Activated T-helper 2 cell treated with anti-CD3 and anti-CD28 coated beads, Interferon-gamma antibody, Interleukin-2, Interleukin-4, amounts not matched to agents 10 μg/mL and 5 μg/mL and 100 μg/mL, durations not matched to agents 14 hours and 24 hours and 36 hours (primary cell): ENCODE measurements at regions of chr5 and their contacts with region 1.

Region 1: DNA sequence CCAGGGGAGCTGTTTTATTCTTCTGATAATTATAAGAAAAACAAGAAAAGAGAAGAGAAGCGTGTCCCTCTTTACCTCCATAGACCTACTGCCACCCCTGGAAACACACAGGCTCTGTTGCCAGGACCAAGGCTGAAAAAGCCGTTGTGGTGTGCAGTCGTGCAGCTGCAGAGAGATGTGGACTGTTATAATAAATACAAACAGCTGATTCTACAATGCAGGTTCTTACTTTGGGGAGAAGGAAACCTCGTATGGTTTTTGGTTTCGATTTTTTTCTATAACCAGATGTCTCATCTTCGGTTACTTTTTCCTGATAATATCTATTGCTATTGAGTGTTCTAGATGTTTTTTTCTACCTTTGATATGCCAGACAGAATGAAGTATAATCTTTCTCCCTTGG is 28.1 kb downstream of the FYB1 start:
- DNase-seq: no peak
- H3K4me3 Mint-ChIP-seq: peak overlapping the region; percentile 47
- H3K27ac Mint-ChIP-seq: peak overlapping the region; percentile 72
- H3K4me1 Mint-ChIP-seq: peaks cover 86% of the 10 kb centered on the region
- H3K27me3 Mint-ChIP-seq: no peaks in the 10 kb centered on the region

Region 2: DNA sequence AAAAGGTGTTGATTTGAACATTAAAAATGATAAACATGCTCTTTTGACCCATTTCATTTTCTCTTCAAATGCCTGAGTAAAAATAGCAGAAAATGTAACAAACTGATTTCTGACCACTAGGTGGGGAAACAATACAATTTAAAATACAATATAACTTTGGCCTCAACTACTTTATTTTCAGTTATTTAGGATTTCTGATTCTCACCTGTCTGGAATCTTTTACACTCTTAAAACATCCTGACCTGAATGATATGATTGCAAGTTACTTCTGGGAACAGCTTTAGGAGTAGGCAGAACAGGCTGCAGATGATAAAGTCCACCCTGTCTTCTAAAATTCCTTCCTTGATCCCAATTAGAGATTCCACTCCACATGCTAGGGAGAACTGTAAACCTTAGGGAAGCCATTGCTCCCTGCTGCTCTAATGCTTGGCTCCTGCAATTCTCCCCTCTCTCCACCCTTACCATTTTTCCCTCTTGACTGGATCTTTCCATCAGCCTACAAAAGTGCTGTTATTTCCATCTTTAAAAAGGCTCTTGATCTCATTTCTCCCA is 42.2 kb before region 1 on chr5:
- intact Hi-C with region 1: loop called (anchors 5 kb)
- DNase-seq: no peak
- H3K4me3 Mint-ChIP-seq: no peak overlapping the region
- H3K27ac Mint-ChIP-seq: peak overlapping the region; percentile 52
- H3K4me1 Mint-ChIP-seq: peaks cover 42% of the 10 kb centered on the region
- H3K27me3 Mint-ChIP-seq: no peaks in the 10 kb centered on the region

Region 3: DNA sequence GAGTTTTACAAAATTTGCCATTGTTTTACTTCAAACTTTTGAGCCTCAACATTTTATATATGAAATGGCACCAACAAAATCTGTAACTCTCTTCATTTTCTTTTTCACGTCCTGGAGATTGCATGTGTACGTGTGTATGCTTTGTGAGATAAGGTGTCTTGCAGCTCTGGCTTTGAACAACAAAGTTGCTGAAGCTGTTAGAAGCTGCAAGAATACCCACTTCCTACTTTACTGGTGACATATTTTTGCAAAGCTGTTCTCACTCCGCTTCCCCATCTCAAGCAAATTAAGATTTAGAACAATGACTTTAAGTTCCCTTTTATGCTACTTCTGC is 13.6 kb before region 1 on chr5:
- intact Hi-C with region 1: loop called (anchors 1 kb)
- DNase-seq: no peak
- H3K4me3 Mint-ChIP-seq: peak overlapping the region; percentile 69
- H3K27ac Mint-ChIP-seq: peak overlapping the region; percentile 84
- H3K4me1 Mint-ChIP-seq: peaks cover 85% of the 10 kb centered on the region
- H3K27me3 Mint-ChIP-seq: no peaks in the 10 kb centered on the region

Region 4: DNA sequence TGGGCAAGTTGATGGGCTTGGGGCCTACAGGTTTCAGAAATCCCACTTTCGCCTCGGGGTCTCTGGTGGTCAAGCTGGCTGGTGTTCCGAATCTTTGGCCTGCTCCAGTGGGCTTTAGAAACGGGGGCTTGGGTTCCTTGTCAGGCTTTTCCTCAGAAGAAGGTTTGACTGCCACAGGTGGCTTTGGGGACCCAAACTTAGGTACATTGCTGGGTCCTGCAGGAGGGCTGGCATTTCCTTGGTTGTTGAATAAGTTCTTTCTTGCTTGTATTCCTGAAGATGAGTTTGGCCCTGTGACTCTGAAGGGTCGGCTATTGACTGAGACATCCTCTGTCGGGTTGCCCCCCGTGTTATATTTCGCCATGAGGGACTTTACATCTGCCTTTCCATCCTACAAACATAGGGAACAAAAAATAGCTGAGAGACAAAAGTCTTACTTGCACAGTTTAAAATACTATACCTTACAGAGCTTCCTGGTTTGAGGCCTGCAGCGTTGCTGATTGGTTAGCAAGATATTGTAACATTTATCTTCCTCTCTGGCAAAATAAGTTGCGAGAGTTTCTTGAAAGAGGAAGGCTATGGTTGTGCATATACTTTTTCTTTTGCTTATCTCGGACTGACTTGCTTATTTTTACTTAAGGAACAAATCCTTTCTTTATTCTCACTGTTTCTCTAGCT is 11.5 kb after region 1 on chr5:
- intact Hi-C with region 1: loop called (anchors 1 kb)
- DNase-seq: no peak
- H3K4me3 Mint-ChIP-seq: peak overlapping the region; percentile 89
- H3K27ac Mint-ChIP-seq: peak overlapping the region; percentile 90
- H3K4me1 Mint-ChIP-seq: peaks cover 62% of the 10 kb centered on the region
- H3K27me3 Mint-ChIP-seq: no peaks in the 10 kb centered on the region

Region 5: GRCh38 chr5:39209924-39210323 is 18.7 kb after region 1 on chr5:
- intact Hi-C with region 1: loop called (anchors 1 kb)
- DNase-seq: peak; percentile 82
- H3K4me3 Mint-ChIP-seq: peak overlapping the region; percentile 73
- H3K27ac Mint-ChIP-seq: peak overlapping the region; percentile 90
- H3K4me1 Mint-ChIP-seq: peaks cover 87% of the 10 kb centered on the region
- H3K27me3 Mint-ChIP-seq: no peaks in the 10 kb centered on the region

Region 6: DNA sequence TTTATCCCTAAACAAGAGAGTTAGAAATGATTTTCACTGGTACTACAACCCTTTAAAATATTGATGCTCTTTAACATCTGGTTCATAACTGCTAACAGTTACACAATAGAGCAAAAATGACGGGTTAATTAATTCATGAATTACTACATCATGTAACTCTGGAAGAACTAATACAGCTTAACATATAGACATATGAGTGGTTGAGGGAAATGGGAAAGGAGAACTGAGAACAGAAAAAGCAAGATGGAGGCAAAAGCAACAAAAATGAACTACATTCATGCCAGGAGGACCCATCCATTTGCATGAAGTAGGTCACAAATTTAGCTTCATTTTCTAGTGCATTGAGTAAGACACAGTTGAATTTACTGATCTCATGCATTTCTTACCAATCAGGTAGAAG is 111.3 kb after region 1 on chr5:
- intact Hi-C with region 1: no loop called
- DNase-seq: no peak
- H3K4me3 Mint-ChIP-seq: no peak overlapping the region
- H3K27ac Mint-ChIP-seq: no peak overlapping the region
- H3K4me1 Mint-ChIP-seq: no peaks in the 10 kb centered on the region
- H3K27me3 Mint-ChIP-seq: peaks cover 6% of the 10 kb centered on the region

Region 7: DNA sequence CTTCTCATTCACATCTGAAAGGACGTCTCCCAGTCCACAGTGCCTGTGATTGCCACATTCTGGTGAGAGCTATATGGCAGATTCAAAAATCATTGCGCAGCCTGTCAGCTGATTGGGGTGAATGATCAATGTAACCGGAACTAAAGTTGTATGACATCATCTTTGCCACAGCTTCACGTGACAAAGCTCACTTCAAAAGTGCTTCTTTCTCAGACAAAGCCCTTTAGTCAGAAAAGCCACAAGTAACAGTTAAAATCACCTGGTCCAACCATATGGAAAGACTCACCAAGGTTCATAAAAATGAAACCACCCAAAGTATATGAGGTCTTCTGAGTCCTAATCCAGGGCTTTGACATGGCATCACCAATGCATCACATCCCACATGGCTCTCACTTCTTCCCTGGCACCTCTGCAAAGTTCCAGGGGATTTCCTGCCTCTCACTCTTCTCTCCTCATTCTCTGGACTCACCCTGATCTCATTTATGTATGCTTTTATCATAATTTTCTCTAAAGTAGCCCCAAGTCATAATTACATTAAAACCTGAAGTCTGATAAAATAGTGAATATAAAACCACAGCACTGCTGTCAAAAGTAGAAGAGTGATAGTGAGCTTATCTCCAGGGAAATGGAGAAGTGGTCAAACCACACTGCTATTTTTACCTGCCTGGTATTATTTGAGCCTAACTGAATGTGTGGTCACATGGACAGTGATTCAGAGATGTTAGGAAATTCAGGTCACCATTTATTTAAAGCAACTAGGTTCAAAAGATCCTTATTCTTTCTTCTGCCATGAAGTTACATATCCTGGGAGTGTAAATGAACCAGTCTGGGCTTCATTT is 1295.4 kb after region 1 on chr5:
- intact Hi-C with region 1: loop called (anchors 5 kb)
- DNase-seq: peak; percentile 64
- H3K4me3 Mint-ChIP-seq: peak overlapping the region; percentile 19
- H3K27ac Mint-ChIP-seq: peak overlapping the region; percentile 75
- H3K4me1 Mint-ChIP-seq: peaks cover 78% of the 10 kb centered on the region
- H3K27me3 Mint-ChIP-seq: no peaks in the 10 kb centered on the region